Activated T-helper 1 cell treated with anti-CD3 and anti-CD28 coated beads, Interleukin-12 subunit alpha, Interleukin-12 subunit beta, Interleukin-2, Interleukin-4 antibody, amounts not matched to agents 30 ng/mL and 10 ng/mL and 1 ng/mL, durations not matched to agents 14 hours and 24 hours and 36 hours (primary cell): ENCODE measurements at regions of chr6 and their contacts with region 1.

Region 1: DNA sequence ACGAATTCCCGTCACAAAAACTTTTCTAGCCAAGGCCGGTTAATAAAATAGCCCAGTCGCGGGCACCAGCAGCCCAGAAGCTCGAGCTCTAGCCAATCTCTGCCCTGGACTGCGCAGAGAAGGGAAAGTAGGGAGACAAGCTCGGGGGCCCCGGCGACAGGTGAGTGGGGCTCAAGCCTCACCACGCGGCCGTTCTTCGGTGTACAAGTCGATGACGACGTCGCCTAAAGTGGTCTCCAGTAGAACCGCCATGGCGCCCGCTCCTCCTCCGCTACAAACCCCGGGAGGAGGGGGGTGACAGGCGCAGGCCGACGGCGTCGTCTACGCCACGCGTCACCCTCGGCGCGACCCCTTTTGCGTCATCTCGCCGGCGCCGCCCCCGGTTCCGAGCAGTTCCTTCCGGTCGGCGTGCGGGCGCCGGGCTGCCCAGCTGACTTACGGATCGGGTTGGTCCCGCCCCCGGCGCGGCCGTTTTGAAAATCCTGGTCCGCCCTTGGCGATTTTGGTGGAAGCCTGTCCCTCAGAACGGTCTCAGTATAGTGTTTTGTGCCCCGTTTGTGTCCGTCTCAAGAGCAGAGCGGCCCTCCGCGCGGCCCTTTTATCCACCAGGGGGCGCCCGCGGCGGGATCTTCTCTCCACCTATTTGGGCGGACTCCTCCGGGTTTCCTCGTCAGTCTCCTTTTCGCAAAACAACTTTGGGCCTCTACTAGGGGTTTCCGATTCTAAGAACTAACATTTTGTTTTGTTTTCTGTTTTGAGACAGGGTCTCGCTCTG is at the start of gene PPIL4:
- DNase-seq: peak; percentile 96
- H3K4me3 Mint-ChIP-seq: peak within 1 kb of the TSS; percentile 98
- H3K27ac Mint-ChIP-seq: peak within 1 kb of the TSS; percentile 99
- H3K4me1 Mint-ChIP-seq: peaks cover 31% of the 10 kb centered on the region
- H3K27me3 Mint-ChIP-seq: peaks cover 4% of the 10 kb centered on the region
- total RNA-seq, gene PPIL4: 25.0 and 26.1 TPM in 2 replicates

Region 2: GRCh38 chr6:149499066-149499465 is 46.9 kb before region 1 on chr6:
- intact Hi-C with region 1: loop called (anchors 1 kb)
- DNase-seq: no peak
- H3K4me3 Mint-ChIP-seq: no peak overlapping the region
- H3K27ac Mint-ChIP-seq: peak overlapping the region; percentile 83
- H3K4me1 Mint-ChIP-seq: peaks cover 78% of the 10 kb centered on the region
- H3K27me3 Mint-ChIP-seq: no peaks in the 10 kb centered on the region

Region 3: DNA sequence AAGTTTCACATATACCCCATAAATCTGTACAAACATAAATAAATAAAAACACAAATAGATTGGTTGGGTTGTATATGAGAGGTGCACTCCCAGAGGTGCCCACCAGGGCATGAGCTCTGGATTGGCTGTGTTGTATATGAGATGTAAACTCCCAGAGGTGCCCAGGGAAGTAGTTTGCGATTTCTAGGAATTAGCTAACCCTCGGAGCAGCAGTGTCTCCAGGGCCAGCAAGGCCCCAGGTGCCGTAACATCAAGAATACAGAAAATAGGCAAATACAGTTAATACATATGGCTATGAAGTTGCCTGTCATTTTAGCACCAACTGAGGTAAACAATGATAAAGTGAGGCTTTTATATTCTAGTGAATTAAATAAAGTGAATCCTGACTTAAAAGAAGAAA is 14.8 kb after region 1 on chr6:
- intact Hi-C with region 1: loop called (anchors 1 kb)
- DNase-seq: no peak
- H3K4me3 Mint-ChIP-seq: no peak overlapping the region
- H3K27ac Mint-ChIP-seq: no peak overlapping the region
- H3K4me1 Mint-ChIP-seq: peaks cover 9% of the 10 kb centered on the region
- H3K27me3 Mint-ChIP-seq: peaks cover 41% of the 10 kb centered on the region

Region 4: GRCh38 chr6:149648148-149649145 is 102.5 kb after region 1 on chr6 and contains the start of gene KATNA1:
- intact Hi-C with region 1: loop called (anchors 1 kb)
- DNase-seq: peak; percentile 89
- H3K4me3 Mint-ChIP-seq: peak within 1 kb of the TSS; percentile 96
- H3K27ac Mint-ChIP-seq: peak within 1 kb of the TSS; percentile 83
- H3K4me1 Mint-ChIP-seq: peaks cover 31% of the 10 kb centered on the region
- H3K27me3 Mint-ChIP-seq: no peaks in the 10 kb centered on the region
- total RNA-seq, gene KATNA1: 20.8 and 22.1 TPM in 2 replicates

Region 5: DNA sequence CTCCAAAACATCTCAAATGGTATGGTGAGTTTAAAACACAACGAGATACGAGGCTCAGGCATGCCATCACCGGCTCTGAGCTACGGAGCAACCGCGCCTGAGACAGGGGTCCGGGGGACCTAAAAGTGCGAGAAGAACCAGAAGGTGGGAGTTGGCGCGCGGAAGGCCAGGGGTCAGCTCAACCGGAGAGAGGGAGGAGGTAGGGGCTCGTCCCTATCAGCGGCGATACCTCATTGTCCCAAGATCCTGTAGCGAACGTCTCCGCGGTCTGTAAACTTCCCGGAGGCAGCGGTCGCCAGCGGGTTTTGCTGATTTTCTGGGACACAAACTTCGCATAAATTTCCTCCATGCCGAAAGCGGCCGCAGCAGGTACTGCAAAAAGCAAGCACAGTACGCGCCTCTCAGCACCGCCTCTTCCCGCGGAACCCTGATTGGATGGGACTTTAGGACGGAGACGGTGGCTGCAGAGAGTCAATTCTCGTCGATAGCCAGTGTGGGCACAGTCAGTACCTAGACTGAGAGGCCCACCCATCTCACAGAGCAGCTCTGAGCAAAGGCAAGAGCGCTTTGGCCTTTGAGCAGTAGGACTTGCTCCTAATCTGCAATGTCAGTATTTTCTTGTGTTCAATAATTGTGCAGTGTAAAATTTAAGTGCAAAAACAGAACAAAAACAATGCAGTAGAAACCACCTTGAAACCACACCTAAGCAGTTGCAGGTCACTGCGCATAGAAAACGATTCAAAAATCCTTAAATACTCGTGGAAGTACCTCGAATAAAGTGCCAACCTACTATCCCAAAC is 200.4 kb after region 1 on chr6 and contains the start of gene NUP43:
- intact Hi-C with region 1: loop called (anchors 1 kb)
- DNase-seq: peak; percentile 90
- H3K4me3 Mint-ChIP-seq: peak within 1 kb of the TSS; percentile 99
- H3K27ac Mint-ChIP-seq: peak within 1 kb of the TSS; percentile 87
- H3K4me1 Mint-ChIP-seq: peaks cover 31% of the 10 kb centered on the region
- H3K27me3 Mint-ChIP-seq: no peaks in the 10 kb centered on the region
- total RNA-seq, gene NUP43: 81.3 and 90.5 TPM in 2 replicates

Region 6: GRCh38 chr6:149925974-149926777 is 380.2 kb after region 1 on chr6:
- intact Hi-C with region 1: loop called (anchors 2 kb)
- DNase-seq: peak; percentile 69
- H3K4me3 Mint-ChIP-seq: peak overlapping the region; percentile 28
- H3K27ac Mint-ChIP-seq: no peak overlapping the region
- H3K4me1 Mint-ChIP-seq: peaks cover 15% of the 10 kb centered on the region
- H3K27me3 Mint-ChIP-seq: peaks cover 87% of the 10 kb centered on the region